Heart right ventricle (tissue), 16 donors: ENCODE measurements at regions of chr14 and their contacts with region 1.

Region 1: DNA sequence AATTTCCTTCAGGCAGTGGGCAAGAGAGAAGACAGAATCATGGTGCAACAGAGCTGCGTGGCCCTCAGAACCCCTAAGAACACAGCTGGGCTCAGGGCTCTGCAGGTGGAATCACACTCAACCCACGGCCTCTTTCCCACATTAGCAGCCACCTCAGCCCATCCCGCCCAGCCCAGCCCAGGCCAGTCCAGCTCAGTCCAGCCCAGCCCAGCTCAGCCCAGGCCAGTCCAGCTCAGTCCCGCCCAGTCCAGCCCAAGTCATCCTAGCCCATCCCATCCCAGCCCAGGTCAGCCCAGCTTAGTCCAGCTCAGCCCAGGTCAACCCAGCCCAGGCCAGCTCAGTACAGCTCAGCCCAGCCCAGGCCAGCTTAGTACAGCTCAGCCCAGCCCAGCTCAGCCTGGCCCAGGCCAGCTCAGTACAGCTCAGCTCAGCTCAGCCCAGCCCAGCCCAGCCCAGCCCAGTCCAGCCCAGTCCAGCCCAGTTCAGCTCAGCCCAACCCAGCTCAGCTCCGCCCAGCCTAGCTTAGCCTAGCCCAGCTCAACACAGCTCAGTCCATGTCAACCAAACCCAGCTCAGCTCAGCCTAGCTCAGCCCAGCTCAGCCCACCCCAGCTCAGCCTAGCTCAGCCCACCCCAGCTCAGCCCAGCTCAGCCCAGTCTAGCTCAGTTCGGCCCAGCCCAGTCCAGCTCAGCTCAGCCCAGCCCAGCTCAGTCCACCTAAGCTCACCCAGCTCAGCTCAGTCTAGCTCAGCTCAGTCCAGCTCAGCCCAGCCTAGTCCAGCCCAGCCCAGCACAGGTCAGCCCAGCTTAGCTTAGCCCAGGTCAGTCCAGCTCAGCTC is 183.1 kb downstream of the TMEM121 start:
- DNase-seq: no peak
- ATAC-seq: no peak
- H3K4me3 ChIP-seq: no peak overlapping the region
- H3K27ac ChIP-seq: no peak overlapping the region
- H3K4me1 ChIP-seq: no peaks in the 10 kb centered on the region
- H3K27me3 ChIP-seq: peaks cover 0 to 9% (median 0%) of the 10 kb centered on the region in 7 donors
- CTCF ChIP-seq: no peak

Region 2: GRCh38 chr14:105568859-105569708 is 140.4 kb before region 1 on chr14:
- intact Hi-C with region 1: no loop called
- DNase-seq: no peak
- ATAC-seq: no peak
- H3K4me3 ChIP-seq: no peak overlapping the region
- H3K27ac ChIP-seq: no peak overlapping the region
- H3K4me1 ChIP-seq: no peaks in the 10 kb centered on the region
- H3K27me3 ChIP-seq: no peaks in the 10 kb centered on the region
- CTCF ChIP-seq: no peak

Region 3: GRCh38 chr14:105589161-105590062 is 120.1 kb before region 1 on chr14:
- intact Hi-C with region 1: loop called in 5 of 10 experiments (anchors 5 kb)
- DNase-seq: no peak
- ATAC-seq: peak in 1 of 8 donors; percentile 28
- H3K4me3 ChIP-seq: no peak overlapping the region
- H3K27ac ChIP-seq: no peak overlapping the region
- H3K4me1 ChIP-seq: no peaks in the 10 kb centered on the region
- H3K27me3 ChIP-seq: no peaks in the 10 kb centered on the region
- CTCF ChIP-seq: no peak